Prostate gland (tissue), 2 donors: ENCODE measurements at regions of chr2 and their contacts with region 1.

Region 1: DNA sequence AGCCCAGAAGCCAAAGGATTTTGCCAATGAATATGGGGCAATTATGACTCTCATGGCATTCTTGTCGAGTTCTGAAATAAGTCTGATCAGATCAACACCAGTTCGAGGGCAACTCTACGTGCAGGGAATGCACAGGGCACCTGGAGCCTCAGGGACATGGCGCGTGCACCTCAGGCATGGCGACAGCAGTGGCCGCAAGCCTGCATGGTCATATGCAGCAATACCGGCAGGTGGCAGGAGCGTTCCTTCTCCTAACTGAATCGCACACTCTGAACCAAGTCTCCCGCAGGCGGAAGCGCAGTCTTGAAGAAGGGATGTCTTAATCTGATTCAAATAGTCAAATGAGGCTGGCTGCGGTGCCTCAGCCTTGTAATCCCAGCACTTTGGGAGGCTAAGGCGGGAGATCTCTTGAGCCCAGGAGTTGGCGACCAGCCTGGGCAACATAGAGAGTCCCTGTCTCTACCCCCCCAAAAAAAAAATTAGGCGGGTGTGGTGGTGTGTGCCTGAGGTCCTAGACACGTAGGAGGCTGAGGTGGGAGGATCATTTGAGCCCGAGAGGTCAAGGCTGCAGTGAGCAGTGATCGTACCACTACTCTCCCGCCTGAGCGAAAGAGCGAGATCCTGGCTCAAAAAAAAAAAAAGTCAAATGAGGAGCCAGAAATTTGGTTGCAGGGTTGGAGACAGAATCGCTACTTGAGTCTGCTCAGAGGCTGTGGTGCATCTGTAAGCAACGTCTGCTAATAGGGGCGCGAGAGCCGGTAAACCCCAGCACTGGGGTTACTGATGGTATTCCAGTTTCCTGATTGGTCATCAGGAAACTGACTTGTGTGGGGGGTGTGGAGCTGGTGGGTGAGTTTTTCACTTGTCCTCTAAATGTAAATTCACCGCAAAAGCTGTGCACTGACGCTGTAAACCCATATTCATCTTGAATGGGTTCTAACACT is 28.8 kb downstream of the FHL2 start:
- DNase-seq: peak; percentile 90
- H3K4me3 ChIP-seq: no peak overlapping the region
- H3K27ac ChIP-seq: peak overlapping the region in 1 of 2 donors; percentile 30
- H3K4me1 ChIP-seq: peaks cover 8% of the 10 kb centered on the region
- H3K27me3 ChIP-seq: no peaks in the 10 kb centered on the region
- CTCF ChIP-seq: peak; percentile 69 to 96 (median 92)
- POLR2A ChIP-seq: no peak

Region 2: GRCh38 chr2:104901037-104901851 is 468.8 kb before region 1 on chr2:
- intact Hi-C with region 1: no loop called
- DNase-seq: no peak
- H3K4me3 ChIP-seq: no peak overlapping the region
- H3K27ac ChIP-seq: no peak overlapping the region
- H3K4me1 ChIP-seq: no peaks in the 10 kb centered on the region
- H3K27me3 ChIP-seq: no peaks in the 10 kb centered on the region
- CTCF ChIP-seq: no peak
- POLR2A ChIP-seq: no peak

Region 3: DNA sequence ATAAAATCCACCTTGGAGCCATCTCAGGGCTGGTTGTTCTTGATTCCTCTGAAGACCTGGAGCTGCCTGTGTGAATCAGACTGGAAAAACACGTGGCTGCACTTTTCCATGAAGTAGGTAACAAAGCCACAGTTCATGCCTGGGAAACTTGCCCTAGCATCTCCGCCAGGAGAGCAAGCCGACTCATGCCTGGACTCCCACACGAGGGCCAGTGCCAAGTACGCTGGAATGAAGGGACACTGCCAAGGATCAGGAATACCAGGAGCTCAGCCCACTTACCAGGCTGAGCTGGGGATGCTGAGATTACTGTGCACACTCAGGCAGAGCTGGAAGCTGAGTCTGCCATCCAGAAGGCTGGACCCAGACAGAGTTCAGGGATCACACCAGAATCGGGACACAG is 39.7 kb after region 1 on chr2:
- intact Hi-C with region 1: loop called (anchors 5 kb)
- DNase-seq: peak; percentile 91
- H3K4me3 ChIP-seq: no peak overlapping the region
- H3K27ac ChIP-seq: peak overlapping the region; percentile 25 to 28
- H3K4me1 ChIP-seq: peaks cover 9% of the 10 kb centered on the region
- H3K27me3 ChIP-seq: no peaks in the 10 kb centered on the region
- CTCF ChIP-seq: peak in 1 of 4 experiments; percentile 8
- POLR2A ChIP-seq: no peak

Region 4: DNA sequence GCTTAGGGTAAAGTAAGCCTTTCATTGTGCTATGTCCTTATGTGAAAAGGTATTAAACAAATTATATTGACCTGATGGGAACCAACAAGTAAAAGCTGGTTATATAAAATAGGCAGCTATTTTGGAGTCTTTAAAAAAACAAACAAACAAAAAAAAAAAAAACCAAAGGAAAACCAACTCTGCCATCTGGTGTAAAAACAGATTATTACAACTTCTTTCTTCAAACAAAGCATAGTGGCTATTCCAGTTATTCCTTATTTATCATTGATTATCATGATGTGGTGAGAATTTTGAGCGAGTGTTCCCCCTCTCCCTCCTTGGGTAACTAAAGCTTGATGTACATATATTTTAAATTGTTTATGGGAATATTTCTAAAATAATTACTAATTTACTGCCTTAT is 151.2 kb after region 1 on chr2:
- intact Hi-C with region 1: loop called (anchors 2 kb)
- DNase-seq: no peak
- H3K4me3 ChIP-seq: no peak overlapping the region
- H3K27ac ChIP-seq: no peak overlapping the region
- H3K4me1 ChIP-seq: no peaks in the 10 kb centered on the region
- H3K27me3 ChIP-seq: no peaks in the 10 kb centered on the region
- CTCF ChIP-seq: peak; percentile 25 to 70 (median 62)
- POLR2A ChIP-seq: no peak